ENCODE measurements at regions of chr21 and their contacts with region 1.

Region 1: DNA sequence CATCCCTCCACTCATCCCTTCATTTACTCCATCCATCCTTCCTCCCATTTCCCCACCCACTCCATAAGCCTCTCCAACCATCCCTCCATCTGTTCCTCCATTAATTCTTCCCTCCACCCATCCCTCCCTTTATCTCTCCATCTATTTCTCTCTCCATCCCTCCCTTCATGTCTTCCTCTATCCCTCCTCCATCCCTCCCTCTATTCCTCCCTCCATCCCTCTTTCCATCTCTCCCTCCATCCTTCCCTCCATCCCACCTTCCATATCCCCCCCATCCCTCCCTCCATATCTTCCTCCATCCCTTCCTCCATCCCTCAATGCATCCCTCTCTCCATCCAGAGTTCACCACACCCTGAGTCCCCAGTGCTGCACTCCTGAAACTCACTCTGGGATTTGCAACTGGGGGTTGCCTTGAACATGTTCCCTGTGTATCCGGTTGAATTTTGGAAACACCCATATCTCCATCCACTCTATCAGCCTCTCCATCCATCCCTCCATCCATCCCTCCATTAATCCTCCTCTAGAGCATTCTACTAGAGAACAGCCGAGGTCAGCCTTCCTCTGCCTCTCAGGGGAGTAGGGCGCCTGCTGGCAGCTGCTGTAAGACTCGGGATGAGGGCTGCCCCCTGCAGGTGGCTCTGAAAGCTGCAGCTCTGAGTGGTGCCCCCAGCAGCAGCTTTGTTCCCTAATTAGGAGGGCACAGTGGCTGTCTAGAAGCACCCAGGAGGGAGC is 39.4 kb downstream of the ABCG1 start:
- DNase-seq: peak; percentile 71 to 84 (median 78)
- H3K4me3 ChIP-seq: no peak overlapping the region
- H3K4me3 Mint-ChIP-seq: peak overlapping the region in 1 of 2 donors; percentile 2
- H3K27ac ChIP-seq: no peak overlapping the region
- H3K27ac Mint-ChIP-seq: peak overlapping the region in 1 of 7 donors; percentile 33
- H3K4me1 ChIP-seq: peaks cover 16 to 24% of the 10 kb centered on the region in 2 donors
- H3K4me1 Mint-ChIP-seq: peaks cover 36% of the 10 kb centered on the region
- H3K27me3 ChIP-seq: no peaks in the 10 kb centered on the region
- H3K27me3 Mint-ChIP-seq: peaks cover 0 to 9% (median 5%) of the 10 kb centered on the region in 3 donors
- CTCF ChIP-seq: peak; percentile 95

Region 2: GRCh38 chr21:42164064-42164789 is 94.1 kb before region 1 on chr21:
- intact Hi-C with region 1: loop called (anchors 2 to 5 kb)
- DNase-seq: peak; percentile 64 to 71 (median 67)
- H3K4me3 ChIP-seq: no peak overlapping the region
- H3K4me3 Mint-ChIP-seq: peak overlapping the region in 1 of 2 donors; percentile 48
- H3K27ac ChIP-seq: no peak overlapping the region
- H3K27ac Mint-ChIP-seq: peak overlapping the region in 2 of 7 donors; percentile 60 to 80
- H3K4me1 ChIP-seq: no peaks in the 10 kb centered on the region
- H3K4me1 Mint-ChIP-seq: peaks cover 12% of the 10 kb centered on the region
- H3K27me3 ChIP-seq: peaks cover 0 to 6% of the 10 kb centered on the region in 2 donors
- H3K27me3 Mint-ChIP-seq: peaks cover 5 to 11% (median 8%) of the 10 kb centered on the region in 3 donors
- CTCF ChIP-seq: peak; percentile 73

Region 3: GRCh38 chr21:42299324-42300044 is 41.2 kb after region 1 on chr21:
- intact Hi-C with region 1: no loop called
- DNase-seq: no peak
- H3K4me3 ChIP-seq: no peak overlapping the region
- H3K4me3 Mint-ChIP-seq: no peak overlapping the region
- H3K27ac ChIP-seq: no peak overlapping the region
- H3K27ac Mint-ChIP-seq: peak overlapping the region in 1 of 7 donors; percentile 57
- H3K4me1 ChIP-seq: peaks cover 16 to 21% of the 10 kb centered on the region in 2 donors
- H3K4me1 Mint-ChIP-seq: peaks cover 18% of the 10 kb centered on the region
- H3K27me3 ChIP-seq: no peaks in the 10 kb centered on the region
- H3K27me3 Mint-ChIP-seq: peaks cover 2 to 7% (median 3%) of the 10 kb centered on the region in 3 donors
- CTCF ChIP-seq: no peak

Measured in CD14-positive monocyte (primary cell).